ENCODE measurements at regions of chr3 and their contacts with region 1.

Region 1: DNA sequence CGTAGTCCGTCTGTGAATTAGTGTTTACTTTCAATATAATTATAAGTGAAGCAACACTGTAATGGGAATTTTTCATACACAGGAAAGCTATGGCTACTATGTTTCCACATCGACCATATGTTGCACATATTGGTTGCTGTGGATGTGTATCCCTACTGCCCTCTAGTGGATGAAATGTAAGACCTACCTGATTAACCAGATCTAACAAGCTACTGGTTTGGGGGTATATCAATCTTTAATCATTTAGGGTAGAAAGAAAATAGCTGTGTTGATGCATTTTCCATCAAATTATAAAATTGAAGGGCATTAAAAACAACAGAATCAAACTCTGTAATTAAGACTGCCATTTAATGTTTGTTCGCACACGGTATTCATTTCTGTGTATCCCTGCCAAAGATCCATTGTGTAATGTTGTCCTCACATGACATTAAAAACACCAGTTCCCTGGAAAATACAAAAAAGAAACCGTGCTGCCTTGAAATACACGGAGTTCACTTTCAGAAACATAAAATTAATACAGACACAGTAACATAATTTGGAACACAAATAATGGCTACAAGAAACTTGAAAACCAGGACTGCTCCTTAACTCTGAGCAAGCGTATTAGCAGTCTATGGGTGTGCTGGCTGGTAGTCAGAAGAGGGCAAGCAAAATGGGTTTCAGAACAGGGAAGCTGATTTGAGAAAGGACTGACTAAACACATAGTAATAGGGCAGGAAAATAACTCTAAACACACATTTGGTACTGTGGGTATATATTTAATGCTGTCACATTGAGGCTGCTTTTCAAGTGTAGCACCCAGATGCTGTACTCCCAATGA is 125.1 kb downstream of the TIGIT start:
- DNase-seq: no peak
- ATAC-seq: peak; percentile 79 to 91 (median 84)
- H3K4me3 ChIP-seq: peak overlapping the region in 5 of 10 donors; percentile 2 to 27 (median 23)
- H3K27ac ChIP-seq: peak overlapping the region; percentile 2 to 72 (median 45)
- H3K4me1 ChIP-seq: peaks cover 0 to 71% (median 32%) of the 10 kb centered on the region in 9 donors
- H3K27me3 ChIP-seq: no peaks in the 10 kb centered on the region
- CTCF ChIP-seq: peak; percentile 73 to 92 (median 86)

Region 2: DNA sequence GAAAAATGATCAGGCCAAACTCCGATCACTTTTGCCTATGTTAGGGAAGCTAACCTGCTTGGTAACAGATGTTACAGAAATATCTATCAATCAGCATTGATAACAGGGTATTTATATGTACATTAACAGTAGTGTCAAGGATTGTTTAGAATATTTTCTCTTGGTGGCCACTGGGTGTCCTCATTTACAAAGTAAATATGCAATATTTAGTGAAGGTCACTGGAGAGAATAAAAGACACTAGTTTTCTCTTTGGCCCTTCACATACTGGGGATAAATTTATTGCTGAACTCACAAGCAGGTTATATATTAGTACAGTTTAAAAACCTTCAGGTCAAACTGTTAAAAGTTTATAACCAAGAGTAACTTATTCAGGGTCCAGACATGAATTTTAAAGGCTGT is 56.1 kb before region 1 on chr3:
- intact Hi-C with region 1: loop called in 2 of 10 experiments (anchors 10 kb)
- DNase-seq: no peak
- ATAC-seq: peak in 7 of 8 donors; percentile 39 to 77 (median 56)
- H3K4me3 ChIP-seq: no peak overlapping the region
- H3K27ac ChIP-seq: peak overlapping the region; percentile 18 to 80 (median 56)
- H3K4me1 ChIP-seq: peaks cover 5 to 55% (median 34%) of the 10 kb centered on the region in 9 donors
- H3K27me3 ChIP-seq: no peaks in the 10 kb centered on the region
- CTCF ChIP-seq: peak; percentile 14 to 68 (median 51)

Region 3: DNA sequence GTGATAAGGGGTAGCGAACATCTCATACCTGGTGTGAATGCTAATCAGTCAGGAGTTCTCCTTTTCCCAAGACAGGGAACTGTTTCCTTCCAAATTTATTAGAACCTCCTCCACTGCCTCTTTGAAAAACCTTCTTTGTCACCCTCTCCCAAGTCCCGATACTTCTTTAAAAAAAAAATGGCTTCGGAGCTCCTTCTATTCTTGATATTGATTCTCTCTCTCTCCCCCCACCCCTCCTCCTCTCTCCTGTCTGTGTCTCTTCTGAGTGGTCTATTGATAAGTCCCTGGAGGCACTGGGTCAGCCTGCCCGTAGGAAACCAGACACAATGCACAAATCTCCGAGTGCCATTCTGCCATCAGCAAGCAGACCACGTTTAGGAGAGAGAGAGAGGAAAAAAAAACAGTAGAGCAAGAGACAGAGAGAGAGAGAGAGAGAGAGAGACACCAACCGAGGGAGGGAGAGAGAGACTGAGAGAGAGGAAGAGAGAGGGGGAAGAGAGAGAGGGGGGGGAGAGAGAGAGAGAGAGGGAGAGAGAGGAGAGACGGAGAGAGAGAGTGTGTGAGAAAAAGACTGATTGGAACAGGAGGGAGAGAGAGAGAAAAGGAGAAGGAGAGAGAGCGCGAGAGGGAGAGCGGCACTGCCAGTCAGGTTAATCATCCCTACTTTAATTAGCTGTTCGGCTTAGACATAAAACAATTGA is 35.8 kb after region 1 on chr3:
- intact Hi-C with region 1: loop called in 2 of 10 experiments (anchors 5 kb)
- DNase-seq: peak in 1 of 2 donors; percentile 21
- ATAC-seq: peak; percentile 30 to 66 (median 42)
- H3K4me3 ChIP-seq: peak overlapping the region in 9 of 10 donors; percentile 36 to 59 (median 56)
- H3K27ac ChIP-seq: peak overlapping the region; percentile 10 to 89 (median 61)
- H3K4me1 ChIP-seq: peaks cover 0 to 80% (median 59%) of the 10 kb centered on the region in 9 donors
- H3K27me3 ChIP-seq: no peaks in the 10 kb centered on the region
- CTCF ChIP-seq: no peak

Region 4: GRCh38 chr3:114498779-114499370 is 79.9 kb after region 1 on chr3:
- intact Hi-C with region 1: no loop called
- DNase-seq: no peak
- ATAC-seq: peak in 7 of 8 donors; percentile 34 to 83 (median 65)
- H3K4me3 ChIP-seq: no peak overlapping the region
- H3K27ac ChIP-seq: peak overlapping the region in 6 of 10 donors; percentile 18 to 69 (median 33)
- H3K4me1 ChIP-seq: peaks cover 0 to 72% (median 43%) of the 10 kb centered on the region in 9 donors
- H3K27me3 ChIP-seq: no peaks in the 10 kb centered on the region
- CTCF ChIP-seq: no peak

Region 5: DNA sequence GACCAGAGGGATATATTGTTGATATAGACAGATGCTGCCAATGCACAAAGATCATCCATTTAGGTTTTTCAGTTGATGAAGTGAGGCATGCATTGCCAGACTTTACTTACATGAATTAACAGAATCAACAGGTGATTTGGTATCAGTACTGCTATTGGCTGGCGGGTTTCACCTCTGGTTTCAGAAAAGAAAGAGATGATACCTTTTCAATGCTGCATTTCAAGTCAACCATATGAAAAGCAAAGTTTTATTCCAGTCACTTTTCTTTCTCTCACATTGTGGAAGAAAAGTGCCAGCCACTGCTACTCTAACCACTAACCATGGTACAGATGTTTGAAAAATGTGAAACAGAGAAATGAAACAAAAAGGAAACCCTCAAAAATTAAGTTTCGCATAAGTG is 164.0 kb after region 1 on chr3:
- intact Hi-C with region 1: loop called in 1 of 10 experiments (anchors 10 kb)
- DNase-seq: no peak
- ATAC-seq: no peak
- H3K4me3 ChIP-seq: no peak overlapping the region
- H3K27ac ChIP-seq: peak overlapping the region in 3 of 10 donors; percentile 9 to 80 (median 21)
- H3K4me1 ChIP-seq: peaks cover 3 to 49% (median 33%) of the 10 kb centered on the region in 9 donors
- H3K27me3 ChIP-seq: no peaks in the 10 kb centered on the region
- CTCF ChIP-seq: no peak

Region 6: GRCh38 chr3:114624571-114625181 is 205.7 kb after region 1 on chr3:
- intact Hi-C with region 1: loop called in 1 of 10 experiments (anchors 5 kb)
- DNase-seq: peak; percentile 89 to 94
- ATAC-seq: peak; percentile 93 to 97 (median 94)
- H3K4me3 ChIP-seq: peak overlapping the region; percentile 23 to 59 (median 50)
- H3K27ac ChIP-seq: peak overlapping the region; percentile 88 to 98 (median 95)
- H3K4me1 ChIP-seq: peaks cover 9 to 87% (median 63%) of the 10 kb centered on the region in 9 donors
- H3K27me3 ChIP-seq: no peaks in the 10 kb centered on the region
- CTCF ChIP-seq: no peak

Region 7: GRCh38 chr3:114839476-114839875 is 420.5 kb after region 1 on chr3:
- intact Hi-C with region 1: no loop called
- DNase-seq: no peak
- ATAC-seq: no peak
- H3K4me3 ChIP-seq: no peak overlapping the region
- H3K27ac ChIP-seq: no peak overlapping the region
- H3K4me1 ChIP-seq: peaks cover 0 to 8% (median 3%) of the 10 kb centered on the region in 9 donors
- H3K27me3 ChIP-seq: no peaks in the 10 kb centered on the region
- CTCF ChIP-seq: no peak

Measured in heart right ventricle (tissue), 16 donors.